PC-3 (cell line): ENCODE measurements at regions of chr2 and their contacts with region 1.

Region 1: DNA sequence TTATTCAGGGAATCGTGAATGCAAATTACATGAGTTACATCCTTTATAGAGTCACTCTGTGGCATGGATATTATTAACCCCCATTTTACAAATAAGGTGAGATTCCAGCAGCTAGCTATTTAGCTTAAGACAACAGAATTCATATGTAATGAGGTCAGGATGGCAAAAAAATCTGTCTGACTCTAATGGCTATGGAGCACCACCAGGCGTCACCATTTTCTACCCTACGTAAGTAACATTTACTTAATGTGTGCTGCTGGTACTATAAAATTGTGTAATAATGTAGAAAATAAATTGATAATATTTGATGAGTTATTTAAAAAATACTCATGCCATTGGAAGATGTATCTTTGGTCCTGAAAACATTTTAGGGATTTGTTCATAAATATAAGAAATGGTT is 2040.1 kb upstream of the LRRTM1 start:
- DNase-seq: peak; percentile 62
- ATAC-seq: no peak
- H3K4me3 ChIP-seq: no peak overlapping the region
- H3K27ac ChIP-seq: no peak overlapping the region
- H3K4me1 ChIP-seq: peaks cover 6% of the 10 kb centered on the region; the same call in 1 of the 2 replicates
- H3K27me3 ChIP-seq: no peaks in the 10 kb centered on the region
- CTCF ChIP-seq: peak; percentile 67

Region 2: DNA sequence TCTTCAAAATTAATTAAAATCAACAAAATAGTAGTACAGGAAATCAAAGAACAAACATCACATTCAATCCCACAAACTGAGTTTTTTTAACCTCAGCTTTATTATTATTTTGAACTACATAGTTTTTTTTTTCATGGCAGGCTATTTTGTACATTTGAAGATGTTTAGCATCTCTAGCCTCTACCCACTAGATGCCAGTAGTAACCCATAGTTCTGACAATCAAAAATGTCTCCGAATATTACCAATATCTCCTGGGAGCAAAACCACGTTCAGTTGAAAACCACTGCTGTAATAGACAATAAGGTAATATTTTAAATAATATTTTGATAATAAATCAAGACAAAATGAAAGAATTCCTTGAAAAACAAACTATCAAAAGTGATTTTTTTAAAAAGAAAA is 1337.6 kb before region 1 on chr2:
- CTCF ChIA-PET with region 1: no interaction called
- POLR2A ChIA-PET with region 1: no interaction called
- intact Hi-C with region 1: loop called (anchors 10 kb)
- DNase-seq: peak; percentile 60
- ATAC-seq: peak; percentile 37; the same call in 1 of the 2 replicates
- H3K4me3 ChIP-seq: no peak overlapping the region
- H3K27ac ChIP-seq: no peak overlapping the region
- H3K4me1 ChIP-seq: 0 out of 2 replicates have a peak, but pooled peaks cover 3% of the 10 kb centered on the region
- H3K27me3 ChIP-seq: no peaks in the 10 kb centered on the region
- CTCF ChIP-seq: peak; percentile 57

Region 3: DNA sequence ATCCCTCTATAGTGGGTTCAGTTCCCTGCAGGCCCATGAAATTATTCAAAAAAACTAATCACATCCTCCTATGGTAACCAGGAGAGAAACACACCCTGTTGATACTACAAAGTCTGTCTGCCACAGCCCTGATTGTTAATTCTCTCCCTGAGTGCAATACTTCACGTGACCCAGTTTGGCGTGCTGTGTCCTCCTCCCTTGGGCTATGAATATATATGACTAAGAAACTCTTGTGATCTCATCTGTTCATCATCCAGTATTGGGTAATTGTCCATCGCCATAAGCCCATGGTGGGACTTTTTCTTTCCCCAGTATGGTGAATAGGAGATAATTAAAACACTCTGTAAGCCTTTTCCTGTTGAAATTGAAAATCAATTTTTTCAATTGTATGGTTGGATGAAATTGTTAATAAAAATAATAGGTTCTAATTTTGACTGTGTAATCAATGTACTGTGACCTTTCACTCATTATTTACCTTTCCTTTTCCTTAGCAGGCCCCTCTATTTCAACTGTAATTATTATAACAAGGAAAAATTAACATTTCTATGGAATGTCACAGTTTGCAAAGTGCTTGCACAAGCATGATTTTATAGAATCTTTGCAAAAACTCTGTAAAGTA is 291.8 kb after region 1 on chr2:
- CTCF ChIA-PET with region 1: no interaction called
- POLR2A ChIA-PET with region 1: no interaction called
- intact Hi-C with region 1: loop called (anchors 10 kb)
- DNase-seq: peak; percentile 17
- ATAC-seq: no peak
- H3K4me3 ChIP-seq: no peak overlapping the region
- H3K27ac ChIP-seq: no peak overlapping the region
- H3K4me1 ChIP-seq: no peaks in the 10 kb centered on the region
- H3K27me3 ChIP-seq: no peaks in the 10 kb centered on the region
- CTCF ChIP-seq: no peak

Region 4: DNA sequence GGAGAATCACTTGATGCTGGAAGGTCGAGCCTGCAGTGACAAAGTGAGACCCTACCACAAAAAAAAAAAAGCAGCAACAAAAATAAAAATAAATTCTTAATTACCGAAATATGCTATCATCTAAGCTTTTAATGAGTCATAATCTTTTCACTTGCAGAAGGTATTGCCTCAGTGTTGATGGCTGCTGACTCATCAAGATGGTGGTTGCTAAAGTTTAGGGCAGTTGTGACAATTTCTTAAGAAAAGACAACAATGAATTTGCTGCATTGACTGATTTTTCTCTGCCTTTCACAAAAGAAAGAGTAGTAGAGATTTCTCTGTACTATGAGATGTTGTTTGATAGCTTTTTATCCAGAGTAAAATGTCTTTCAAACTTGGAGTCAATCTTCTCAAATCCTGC is 305.4 kb after region 1 on chr2:
- CTCF ChIA-PET with region 1: interaction called, 10 read pairs
- POLR2A ChIA-PET with region 1: no interaction called
- intact Hi-C with region 1: no loop called
- DNase-seq: no peak
- ATAC-seq: no peak
- H3K4me3 ChIP-seq: no peak overlapping the region
- H3K27ac ChIP-seq: no peak overlapping the region
- H3K4me1 ChIP-seq: no peaks in the 10 kb centered on the region
- H3K27me3 ChIP-seq: no peaks in the 10 kb centered on the region
- CTCF ChIP-seq: no peak

Region 5: GRCh38 chr2:82790206-82791021 is 445.7 kb after region 1 on chr2:
- CTCF ChIA-PET with region 1: no interaction called
- POLR2A ChIA-PET with region 1: no interaction called
- intact Hi-C with region 1: loop called (anchors 10 kb)
- DNase-seq: peak; percentile 77
- ATAC-seq: peak; percentile 65
- H3K4me3 ChIP-seq: peak overlapping the region; percentile 42; the same call in 1 of the 2 replicates
- H3K27ac ChIP-seq: peak overlapping the region; percentile 79
- H3K4me1 ChIP-seq: peaks cover 37% of the 10 kb centered on the region
- H3K27me3 ChIP-seq: no peaks in the 10 kb centered on the region
- CTCF ChIP-seq: no peak

Region 6: GRCh38 chr2:82993637-82994036 is 649.0 kb after region 1 on chr2:
- CTCF ChIA-PET with region 1: no interaction called
- POLR2A ChIA-PET with region 1: no interaction called
- intact Hi-C with region 1: loop called (anchors 10 kb)
- DNase-seq: peak; percentile 96
- ATAC-seq: peak; percentile 94
- H3K4me3 ChIP-seq: peak overlapping the region; percentile 48
- H3K27ac ChIP-seq: peak overlapping the region; percentile 98
- H3K4me1 ChIP-seq: peaks cover 39% of the 10 kb centered on the region
- H3K27me3 ChIP-seq: no peaks in the 10 kb centered on the region
- CTCF ChIP-seq: no peak

Region 7: GRCh38 chr2:83196225-83196624 is 851.6 kb after region 1 on chr2:
- CTCF ChIA-PET with region 1: interaction called, 7 read pairs
- POLR2A ChIA-PET with region 1: no interaction called
- intact Hi-C with region 1: loop called (anchors 1 kb)
- DNase-seq: peak; percentile 73
- ATAC-seq: peak; percentile 93
- H3K4me3 ChIP-seq: no peak overlapping the region
- H3K27ac ChIP-seq: no peak overlapping the region
- H3K4me1 ChIP-seq: no peaks in the 10 kb centered on the region
- H3K27me3 ChIP-seq: no peaks in the 10 kb centered on the region
- CTCF ChIP-seq: peak; percentile 78